ENCODE measurements at regions of chr6 and their contacts with region 1.

Region 1: DNA sequence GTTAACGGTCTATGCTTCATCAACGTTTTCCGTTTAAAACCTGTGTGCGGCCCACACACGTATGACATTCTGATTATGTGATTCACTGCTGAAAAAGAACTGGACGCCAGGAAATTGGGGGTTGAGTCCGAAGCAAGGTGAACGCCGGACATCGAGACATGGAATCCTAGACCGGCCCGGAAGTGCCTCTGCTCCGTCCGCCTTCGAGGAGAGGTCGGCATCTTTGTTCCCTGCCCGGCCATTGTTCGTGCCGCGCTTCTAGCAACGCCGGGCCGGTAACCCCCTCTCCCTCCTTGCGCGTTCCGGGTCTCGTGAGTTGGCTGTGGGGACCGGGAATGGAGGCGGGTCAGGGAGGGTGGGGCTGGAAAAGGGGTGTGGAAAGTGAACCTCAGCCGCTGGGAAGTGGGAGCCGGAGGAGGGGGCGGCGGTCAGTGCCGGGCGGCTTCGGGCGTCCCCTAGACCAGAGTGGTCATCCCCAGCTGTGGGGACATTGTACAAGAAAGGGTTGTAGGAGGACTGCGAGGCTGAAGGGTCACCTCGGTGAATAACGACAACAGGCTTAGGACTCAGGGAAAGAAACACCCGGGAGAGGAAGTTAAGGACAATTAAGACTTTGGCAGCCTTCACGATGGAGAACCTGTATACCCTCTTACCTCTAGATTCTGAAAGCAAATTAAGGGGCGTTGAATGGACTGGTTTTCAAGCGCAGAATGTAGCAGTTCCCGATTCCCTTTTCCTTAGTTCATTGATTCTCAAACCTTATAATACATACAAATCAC is at the start of gene ZSCAN9:
- DNase-seq: peak; percentile 83 to 94 (median 90)
- ATAC-seq: peak; percentile 89
- H3K4me3 ChIP-seq: peak within 1 kb of the TSS; percentile 79
- H3K27ac ChIP-seq: peak within 1 kb of the TSS; percentile 85
- H3K4me1 ChIP-seq: peaks cover 7 to 47% of the 10 kb centered on the region in 2 experiments
- H3K27me3 ChIP-seq: no peaks in the 10 kb centered on the region
- CTCF ChIP-seq: no peak
- EP300 ChIP-seq: peak; percentile 67; the same call in 1 of the 2 replicates
- POLR2A ChIP-seq: peak; percentile 91
- RAD21 ChIP-seq: peak; percentile 21 to 29; a peak in 3 of 4 replicates
- polyA plus RNA-seq, gene ZSCAN9: 18.8 to 20.0 TPM

Region 2: GRCh38 chr6:28252009-28252975 is 27.0 kb after region 1 on chr6 and contains the start of gene ZKSCAN4:
- CTCF ChIA-PET with region 1: no interaction called
- POLR2A ChIA-PET with region 1: interaction called, 3 read pairs
- in situ Hi-C with region 1: no loop called
- intact Hi-C with region 1: loop called (anchors 1 kb)
- DNase-seq: peak; percentile 82 to 96 (median 88)
- ATAC-seq: peak; percentile 94
- H3K4me3 ChIP-seq: peak within 1 kb of the TSS; percentile 73
- H3K27ac ChIP-seq: peak within 1 kb of the TSS; percentile 60
- H3K4me1 ChIP-seq: peaks cover 10 to 24% of the 10 kb centered on the region in 2 experiments
- H3K27me3 ChIP-seq: no peaks in the 10 kb centered on the region
- CTCF ChIP-seq: no peak
- EP300 ChIP-seq: peak; percentile 62
- POLR2A ChIP-seq: peak; percentile 75
- RAD21 ChIP-seq: peak; percentile 35 to 38
- polyA plus RNA-seq, gene ZKSCAN4: 1.2 to 1.6 TPM

Region 3: GRCh38 chr6:28281288-28282064 is 56.2 kb after region 1 on chr6 and contains the start of gene PGBD1:
- CTCF ChIA-PET with region 1: no interaction called
- POLR2A ChIA-PET with region 1: interaction called, 4 read pairs
- in situ Hi-C with region 1: no loop called
- intact Hi-C with region 1: loop called (anchors 5 kb)
- DNase-seq: peak; percentile 76 to 92 (median 86)
- ATAC-seq: peak; percentile 97
- H3K4me3 ChIP-seq: peak within 1 kb of the TSS; percentile 73
- H3K27ac ChIP-seq: peak within 1 kb of the TSS; percentile 48
- H3K4me1 ChIP-seq: peaks cover 4 to 7% of the 10 kb centered on the region in 2 experiments; a peak in 2 of 5 replicates
- H3K27me3 ChIP-seq: no peaks in the 10 kb centered on the region
- CTCF ChIP-seq: no peak; a peak in 1 of 6 replicates
- EP300 ChIP-seq: no peak
- POLR2A ChIP-seq: peak; percentile 82
- RAD21 ChIP-seq: peak; percentile 28 to 35
- polyA plus RNA-seq, gene PGBD1: 3.3 to 3.5 TPM

Region 4: DNA sequence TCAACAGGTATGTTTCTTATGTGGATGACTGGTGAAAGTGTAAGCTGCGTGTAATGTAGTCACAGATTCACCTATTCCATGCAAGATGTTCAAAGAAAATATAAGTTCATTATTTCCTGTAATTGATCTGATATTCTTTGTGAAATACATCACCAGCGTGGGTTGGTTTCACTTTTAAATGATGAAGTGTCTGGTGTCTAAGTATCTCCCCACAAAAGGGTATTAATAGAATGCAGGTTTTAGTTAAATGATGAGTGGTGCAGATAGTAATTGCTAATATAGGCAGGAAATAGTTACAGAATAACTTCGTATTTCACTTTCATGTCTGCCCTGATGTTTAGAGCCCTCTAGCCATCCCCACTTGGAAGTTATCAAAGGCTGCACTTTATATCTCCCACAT is 78.3 kb after region 1 on chr6:
- CTCF ChIA-PET with region 1: no interaction called
- POLR2A ChIA-PET with region 1: no interaction called
- in situ Hi-C with region 1: no loop called
- intact Hi-C with region 1: no loop called
- DNase-seq: no peak
- ATAC-seq: no peak
- H3K4me3 ChIP-seq: no peak overlapping the region
- H3K27ac ChIP-seq: no peak overlapping the region
- H3K4me1 ChIP-seq: peaks cover 0 to 13% of the 10 kb centered on the region in 2 experiments; a peak in 3 of 5 replicates
- H3K27me3 ChIP-seq: no peaks in the 10 kb centered on the region
- CTCF ChIP-seq: no peak
- EP300 ChIP-seq: no peak
- POLR2A ChIP-seq: no peak
- RAD21 ChIP-seq: no peak

Region 5: DNA sequence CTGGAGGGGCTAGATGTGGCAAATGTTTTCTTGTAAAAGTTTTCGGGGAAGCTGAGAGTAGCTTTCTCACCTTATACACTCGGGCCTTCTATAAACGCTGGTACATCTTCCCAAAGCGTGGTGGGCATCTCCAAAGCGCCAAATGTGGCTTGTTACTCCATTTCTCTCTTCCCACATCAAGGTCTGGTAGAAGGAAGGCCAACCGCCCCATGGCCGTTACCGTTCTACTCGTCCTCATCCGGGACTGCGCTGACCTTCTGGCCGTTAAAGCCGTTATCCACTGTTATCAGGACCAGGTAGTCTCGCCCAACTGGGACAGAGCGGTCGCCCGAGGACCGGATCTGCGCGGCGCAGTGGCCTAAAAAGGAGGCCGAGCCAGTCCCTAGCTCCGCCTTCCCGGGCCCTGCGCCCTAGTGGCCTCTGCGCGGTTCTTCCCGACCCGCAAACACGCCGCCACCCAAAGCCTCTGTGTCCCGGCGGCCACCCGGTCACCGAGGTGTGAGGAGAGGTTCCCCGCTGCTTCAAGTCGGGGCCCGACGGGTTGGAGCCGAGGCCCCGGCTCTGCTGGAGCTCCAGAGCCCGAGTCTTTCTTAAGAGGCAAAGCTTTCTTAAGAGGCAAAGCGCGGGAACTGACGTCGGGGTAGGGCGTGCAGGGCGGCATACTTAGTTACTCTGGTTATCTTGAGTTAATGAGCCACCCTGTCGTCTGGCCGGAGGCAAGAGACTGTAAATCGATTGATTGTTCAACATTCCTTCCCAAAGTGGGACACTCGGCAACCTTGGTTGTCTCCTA is 390.9 kb after region 1 on chr6:
- CTCF ChIA-PET with region 1: no interaction called
- POLR2A ChIA-PET with region 1: no interaction called
- in situ Hi-C with region 1: no loop called
- intact Hi-C with region 1: loop called (anchors 10 kb)
- DNase-seq: peak; percentile 92 to 98 (median 94)
- ATAC-seq: peak; percentile 91
- H3K4me3 ChIP-seq: peak overlapping the region; percentile 44
- H3K27ac ChIP-seq: peak overlapping the region; percentile 86
- H3K4me1 ChIP-seq: peaks cover 13 to 22% of the 10 kb centered on the region in 2 experiments; a peak in 4 of 5 replicates
- H3K27me3 ChIP-seq: no peaks in the 10 kb centered on the region
- CTCF ChIP-seq: peak; percentile 28 to 33 (median 29); a peak in 3 of 6 replicates
- EP300 ChIP-seq: peak; percentile 98
- POLR2A ChIP-seq: peak; percentile 97
- RAD21 ChIP-seq: no peak; a peak in 1 of 4 replicates

Region 6: GRCh38 chr6:29792123-29793035 is 1567.1 kb after region 1 on chr6:
- CTCF ChIA-PET with region 1: no interaction called
- POLR2A ChIA-PET with region 1: no interaction called
- in situ Hi-C with region 1: no loop called
- intact Hi-C with region 1: no loop called
- DNase-seq: peak in 3 of 4 experiments; percentile 46 to 70 (median 67)
- ATAC-seq: peak; percentile 89
- H3K4me3 ChIP-seq: no peak overlapping the region
- H3K27ac ChIP-seq: no peak overlapping the region
- H3K4me1 ChIP-seq: peaks cover 0 to 13% of the 10 kb centered on the region in 2 experiments; a peak in 2 of 5 replicates
- H3K27me3 ChIP-seq: peaks cover 14 to 29% of the 10 kb centered on the region in 2 experiments
- CTCF ChIP-seq: no peak
- EP300 ChIP-seq: no peak
- POLR2A ChIP-seq: no peak
- RAD21 ChIP-seq: no peak